Activated CD8-positive, alpha-beta T cell treated with anti-CD3 and anti-CD28 coated beads, Interleukin-2, amount 10 ng/mL, durations not matched to agents 7 days and 5 days (primary cell): ENCODE measurements at regions of chr9 and their contacts with region 1.

Region 1: GRCh38 chr9:77896938-77897667 is 134.5 kb downstream of the GNAQ start:
- DNase-seq: no peak
- ATAC-seq: no peak
- H3K4me3 Mint-ChIP-seq: no peak overlapping the region
- H3K27ac Mint-ChIP-seq: no peak overlapping the region
- H3K4me1 Mint-ChIP-seq: peaks cover 26% of the 10 kb centered on the region
- H3K27me3 Mint-ChIP-seq: no peaks in the 10 kb centered on the region

Region 2: GRCh38 chr9:77864211-77864889 is 32.8 kb before region 1 on chr9:
- CTCF ChIA-PET with region 1: interaction called, 10 read pairs
- POLR2A ChIA-PET with region 1: no interaction called
- DNase-seq: no peak
- ATAC-seq: no peak
- H3K4me3 Mint-ChIP-seq: no peak overlapping the region
- H3K27ac Mint-ChIP-seq: no peak overlapping the region
- H3K4me1 Mint-ChIP-seq: peaks cover 4% of the 10 kb centered on the region
- H3K27me3 Mint-ChIP-seq: no peaks in the 10 kb centered on the region

Region 3: GRCh38 chr9:77884395-77884851 is 12.7 kb before region 1 on chr9:
- CTCF ChIA-PET with region 1: interaction called, 12 read pairs
- POLR2A ChIA-PET with region 1: no interaction called
- DNase-seq: no peak
- ATAC-seq: no peak
- H3K4me3 Mint-ChIP-seq: no peak overlapping the region
- H3K27ac Mint-ChIP-seq: no peak overlapping the region
- H3K4me1 Mint-ChIP-seq: peaks cover 14% of the 10 kb centered on the region
- H3K27me3 Mint-ChIP-seq: no peaks in the 10 kb centered on the region

Region 4: DNA sequence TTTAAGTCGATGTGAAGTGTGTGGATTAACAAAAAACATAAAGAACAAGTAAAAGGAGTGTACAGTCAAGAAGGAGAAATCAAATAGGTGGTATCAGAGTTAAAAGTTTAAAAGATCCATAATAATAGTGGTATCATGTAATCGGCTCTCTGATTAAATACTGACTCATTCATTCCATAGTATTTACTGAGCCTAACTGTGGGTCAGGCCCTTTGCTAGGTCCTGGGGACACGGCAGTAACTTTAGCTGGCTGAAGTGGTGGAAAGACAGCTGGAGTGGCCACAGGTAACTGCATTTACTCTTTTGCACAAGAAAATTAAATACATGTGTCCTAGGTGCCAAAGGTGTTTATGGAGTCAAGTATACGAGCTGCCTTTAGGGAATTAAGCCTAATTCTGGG is 10.5 kb after region 1 on chr9:
- CTCF ChIA-PET with region 1: interaction called, 11 read pairs
- POLR2A ChIA-PET with region 1: interaction called, 4 read pairs
- DNase-seq: no peak
- ATAC-seq: no peak
- H3K4me3 Mint-ChIP-seq: no peak overlapping the region
- H3K27ac Mint-ChIP-seq: no peak overlapping the region
- H3K4me1 Mint-ChIP-seq: peaks cover 41% of the 10 kb centered on the region
- H3K27me3 Mint-ChIP-seq: no peaks in the 10 kb centered on the region

Region 5: GRCh38 chr9:78121488-78121887 is 224.4 kb after region 1 on chr9:
- CTCF ChIA-PET with region 1: no interaction called
- POLR2A ChIA-PET with region 1: no interaction called
- DNase-seq: peak; percentile 68
- ATAC-seq: no peak
- H3K4me3 Mint-ChIP-seq: no peak overlapping the region
- H3K27ac Mint-ChIP-seq: no peak overlapping the region
- H3K4me1 Mint-ChIP-seq: peaks cover 23% of the 10 kb centered on the region
- H3K27me3 Mint-ChIP-seq: peaks cover 8% of the 10 kb centered on the region